ENCODE measurements at regions of chr18 and their contacts with region 1.

Region 1: DNA sequence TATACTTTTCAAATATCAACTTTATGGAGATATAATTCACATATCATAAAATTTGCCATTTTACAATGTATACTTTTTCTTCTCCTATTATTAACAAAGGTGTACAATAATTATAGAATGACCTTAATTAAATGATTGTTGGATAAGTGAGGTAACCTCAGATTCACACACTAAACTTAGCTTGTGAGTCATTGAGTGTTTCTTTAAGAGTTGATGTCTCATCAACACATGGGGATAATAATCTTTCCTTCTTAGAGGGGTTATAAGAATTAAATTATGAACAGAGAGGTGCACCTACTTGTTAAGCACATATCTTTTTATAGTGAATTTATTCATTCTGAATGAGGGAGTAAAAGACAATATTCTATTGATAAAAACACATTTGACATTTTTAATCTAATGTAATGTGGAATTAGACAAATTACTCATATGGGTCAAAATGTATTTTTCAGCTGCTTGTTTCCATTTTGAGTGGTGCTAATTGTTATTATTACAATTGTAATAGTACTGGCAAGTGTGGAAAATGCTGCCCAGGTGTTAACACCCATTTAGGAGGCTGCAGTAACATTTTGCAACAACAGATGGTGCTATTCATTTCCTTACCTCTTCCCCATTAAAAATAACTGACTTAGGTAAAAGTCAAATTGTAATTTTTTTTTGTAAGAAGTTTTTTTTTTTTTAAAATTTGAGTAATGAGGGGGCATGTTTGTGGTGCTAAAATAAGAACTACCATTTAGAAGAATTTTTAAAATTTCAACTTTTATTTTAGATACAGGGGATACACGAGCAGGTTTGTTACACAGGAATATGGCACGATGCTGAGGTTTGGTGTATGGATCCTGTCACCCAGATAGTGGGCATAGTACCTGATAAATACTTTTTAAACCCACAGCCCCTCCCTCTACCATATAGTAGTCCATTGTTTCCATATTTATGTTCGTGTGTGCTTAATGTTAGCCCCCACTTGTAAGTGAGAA is 32.1 kb upstream of the DYNAP start:
- DNase-seq: peak; percentile 21
- CTCF ChIP-seq: peak; percentile 63

Region 2: DNA sequence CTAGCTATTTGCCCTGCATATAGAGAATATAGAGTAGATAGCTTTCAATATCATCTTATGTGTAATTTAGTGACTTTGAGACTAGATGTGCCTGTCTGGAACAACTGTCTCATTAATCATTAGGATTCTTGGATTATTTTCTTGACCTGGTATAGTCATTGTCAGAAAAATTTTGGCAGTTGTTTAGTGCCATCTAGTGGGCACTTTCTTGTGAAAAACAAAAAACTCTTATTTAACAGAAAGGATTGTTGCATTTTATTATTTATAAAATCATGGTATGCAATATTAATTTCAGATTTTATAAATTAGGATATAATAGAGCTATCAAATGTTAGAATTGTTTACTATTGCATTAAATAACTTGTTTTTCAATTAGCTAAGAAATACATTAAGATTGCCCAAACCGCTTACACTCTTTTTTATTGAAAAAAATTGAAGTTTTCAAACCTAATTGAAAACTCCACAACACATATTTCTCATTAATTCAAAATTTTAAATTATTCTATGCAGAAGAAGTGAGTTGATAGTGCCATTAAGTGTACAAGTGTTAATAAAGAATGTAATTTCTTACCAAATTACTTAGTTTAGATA is 112.5 kb after region 1 on chr18:
- CTCF ChIA-PET with region 1: interaction called, 11 read pairs
- POLR2A ChIA-PET with region 1: no interaction called
- DNase-seq: peak; percentile 26
- CTCF ChIP-seq: peak; percentile 53